ENCODE measurements at regions of chr11 and their contacts with region 1.

Region 1: DNA sequence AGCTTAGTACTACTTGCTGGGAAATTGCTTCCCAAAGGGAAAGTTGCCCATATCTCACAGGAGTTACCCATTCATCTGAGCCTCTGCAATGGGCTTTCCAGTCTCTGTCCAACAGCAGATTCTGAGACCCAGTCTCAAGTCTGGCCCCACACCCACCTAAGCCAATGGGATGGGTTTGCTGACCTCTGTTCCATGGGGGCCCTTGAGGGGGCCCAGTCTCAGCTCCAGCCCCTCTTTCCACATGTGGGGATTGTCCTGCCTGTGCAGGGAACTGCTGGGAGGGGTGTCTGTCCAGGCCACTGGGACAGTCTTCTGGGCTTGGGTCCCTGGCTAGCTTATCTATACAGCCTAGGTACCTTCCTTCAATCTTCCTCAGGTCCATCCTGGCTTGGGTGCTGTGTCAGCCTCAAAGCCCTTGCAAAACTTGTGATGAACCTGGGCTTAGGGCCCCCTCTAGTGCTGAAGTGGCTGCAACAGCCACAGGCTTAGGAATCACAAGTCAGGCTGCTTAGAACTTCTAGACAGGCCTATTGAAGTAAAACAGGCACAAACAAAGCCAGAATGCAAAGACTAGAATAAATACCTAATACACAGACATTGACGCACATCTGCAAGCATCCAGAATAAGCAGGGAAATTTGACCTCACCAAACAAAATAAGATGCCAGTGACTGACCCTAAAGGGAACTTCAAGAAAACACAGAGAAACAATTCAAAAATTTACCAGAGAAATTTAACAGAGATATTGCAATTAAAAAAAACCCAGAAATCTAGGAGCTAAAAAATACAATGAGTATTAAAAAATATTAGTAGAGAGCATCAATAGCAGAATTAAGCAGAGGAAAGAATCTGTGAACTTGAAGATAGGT is 11.7 kb upstream of the PATL1 start:
- H3K4me3 Mint-ChIP-seq: no peak overlapping the region
- H3K27ac Mint-ChIP-seq: no peak overlapping the region
- H3K4me1 Mint-ChIP-seq: no peaks in the 10 kb centered on the region
- H3K27me3 Mint-ChIP-seq: no peaks in the 10 kb centered on the region

Region 2: GRCh38 chr11:59448484-59448883 is 232.0 kb before region 1 on chr11:
- intact Hi-C with region 1: no loop called
- H3K4me3 Mint-ChIP-seq: no peak overlapping the region
- H3K27ac Mint-ChIP-seq: no peak overlapping the region
- H3K4me1 Mint-ChIP-seq: no peaks in the 10 kb centered on the region
- H3K27me3 Mint-ChIP-seq: no peaks in the 10 kb centered on the region

Region 3: GRCh38 chr11:59542142-59542810 is 138.2 kb before region 1 on chr11:
- intact Hi-C with region 1: loop called (anchors 1 kb)
- H3K4me3 Mint-ChIP-seq: no peak overlapping the region
- H3K27ac Mint-ChIP-seq: no peak overlapping the region
- H3K4me1 Mint-ChIP-seq: peaks cover 19% of the 10 kb centered on the region
- H3K27me3 Mint-ChIP-seq: no peaks in the 10 kb centered on the region

Measured in dendritic cell treated with granulocyte-macrophage colony-stimulating factor and Interleukin-4, amounts not matched to agents 40 ng/mL and 50 ng/mL, for 4 days (primary cell).